Activated naive CD4-positive, alpha-beta T cell treated with anti-CD3 and anti-CD28 coated beads for 36 hours (primary cell): ENCODE measurements at regions of chr10 and their contacts with region 1.

Region 1: GRCh38 chr10:81708929-81709328 is 166.1 kb upstream of the NRG3 start:
- DNase-seq: no peak
- H3K4me3 Mint-ChIP-seq: no peak overlapping the region
- H3K27ac Mint-ChIP-seq: no peak overlapping the region
- H3K4me1 Mint-ChIP-seq: peaks cover 10% of the 10 kb centered on the region
- H3K27me3 Mint-ChIP-seq: no peaks in the 10 kb centered on the region

Region 2: DNA sequence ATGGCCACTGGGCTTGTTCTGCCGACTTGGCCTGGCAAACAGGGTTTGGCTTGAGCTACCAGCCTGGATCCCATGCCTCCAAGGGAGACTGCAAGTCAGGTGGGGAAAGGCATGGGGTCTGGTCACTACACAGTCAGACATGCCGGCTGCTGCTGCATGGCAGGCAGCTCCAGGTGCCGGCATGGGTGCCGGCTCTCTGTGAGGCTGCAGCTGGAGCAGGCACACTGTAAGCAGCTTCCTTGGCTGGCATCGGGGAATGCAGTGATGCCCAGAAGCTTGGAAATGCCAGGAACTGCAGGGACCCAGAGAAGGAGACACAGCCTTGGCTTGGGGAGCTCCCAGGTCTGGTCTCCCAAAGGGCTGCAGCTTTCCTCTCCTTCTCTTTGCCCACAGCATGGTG is 139.4 kb before region 1 on chr10:
- CTCF ChIA-PET with region 1: no interaction called
- intact Hi-C with region 1: loop called (anchors 10 kb)
- DNase-seq: no peak
- H3K4me3 Mint-ChIP-seq: no peak overlapping the region
- H3K27ac Mint-ChIP-seq: no peak overlapping the region
- H3K4me1 Mint-ChIP-seq: peaks cover 1% of the 10 kb centered on the region
- H3K27me3 Mint-ChIP-seq: no peaks in the 10 kb centered on the region

Region 3: DNA sequence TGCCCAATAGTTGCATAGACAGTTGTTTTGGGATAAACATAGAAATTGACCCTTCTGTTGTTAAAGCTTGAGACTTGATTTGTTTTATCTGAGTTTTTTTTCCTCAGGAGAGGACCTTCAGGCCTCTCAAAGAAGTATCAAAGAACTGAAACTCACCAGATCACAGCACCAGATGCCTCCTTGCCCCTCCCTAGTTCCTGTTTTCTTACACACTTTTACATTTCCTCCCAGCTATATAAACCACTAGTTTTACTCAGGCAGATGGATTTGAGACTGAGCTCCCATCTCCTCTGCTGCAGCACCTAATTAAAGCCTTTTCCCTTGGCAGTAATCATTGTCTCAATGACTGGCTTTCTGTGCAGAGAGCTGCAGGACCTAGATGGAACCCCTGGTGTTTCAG is 15.5 kb after region 1 on chr10:
- CTCF ChIA-PET with region 1: no interaction called
- intact Hi-C with region 1: loop called (anchors 2 kb)
- DNase-seq: peak; percentile 8
- H3K4me3 Mint-ChIP-seq: no peak overlapping the region
- H3K27ac Mint-ChIP-seq: peak overlapping the region; percentile 74
- H3K4me1 Mint-ChIP-seq: peaks cover 30% of the 10 kb centered on the region
- H3K27me3 Mint-ChIP-seq: no peaks in the 10 kb centered on the region

Region 4: GRCh38 chr10:82420001-82420400 is 711.1 kb after region 1 on chr10:
- CTCF ChIA-PET with region 1: no interaction called
- intact Hi-C with region 1: no loop called
- DNase-seq: no peak
- H3K4me3 Mint-ChIP-seq: no peak overlapping the region
- H3K27ac Mint-ChIP-seq: no peak overlapping the region
- H3K4me1 Mint-ChIP-seq: no peaks in the 10 kb centered on the region
- H3K27me3 Mint-ChIP-seq: no peaks in the 10 kb centered on the region